HEK293T (cell line): ENCODE measurements at regions of chr7 and their contacts with region 1.

Region 1: GRCh38 chr7:104848138-104848990 is 165.6 kb upstream of the KMT2E start:
- DNase-seq: peak; percentile 50

Region 2: GRCh38 chr7:104643587-104644217 is 204.7 kb before region 1 on chr7:
- CTCF ChIA-PET with region 1: interaction called, 14 read pairs
- POLR2A ChIA-PET with region 1: no interaction called
- DNase-seq: peak; percentile 44